ENCODE measurements at regions of chr17 and their contacts with region 1.

Region 1: GRCh38 chr17:7673239-7673638 is 14.1 kb downstream of the TP53 start:
- DNase-seq: peak in 5 of 9 donors; percentile 5 to 29 (median 16)
- ATAC-seq: no peak
- H3K4me3 ChIP-seq: no peak overlapping the region
- H3K4me3 Mint-ChIP-seq: no peak overlapping the region
- H3K27ac ChIP-seq: no peak overlapping the region
- H3K27ac Mint-ChIP-seq: peak overlapping the region in 1 of 9 donors; percentile 19
- H3K4me1 ChIP-seq: no peaks in the 10 kb centered on the region
- H3K4me1 Mint-ChIP-seq: peaks cover 4 to 15% (median 8%) of the 10 kb centered on the region in 7 donors
- H3K27me3 ChIP-seq: no peaks in the 10 kb centered on the region
- H3K27me3 Mint-ChIP-seq: no peaks in the 10 kb centered on the region

Region 2: DNA sequence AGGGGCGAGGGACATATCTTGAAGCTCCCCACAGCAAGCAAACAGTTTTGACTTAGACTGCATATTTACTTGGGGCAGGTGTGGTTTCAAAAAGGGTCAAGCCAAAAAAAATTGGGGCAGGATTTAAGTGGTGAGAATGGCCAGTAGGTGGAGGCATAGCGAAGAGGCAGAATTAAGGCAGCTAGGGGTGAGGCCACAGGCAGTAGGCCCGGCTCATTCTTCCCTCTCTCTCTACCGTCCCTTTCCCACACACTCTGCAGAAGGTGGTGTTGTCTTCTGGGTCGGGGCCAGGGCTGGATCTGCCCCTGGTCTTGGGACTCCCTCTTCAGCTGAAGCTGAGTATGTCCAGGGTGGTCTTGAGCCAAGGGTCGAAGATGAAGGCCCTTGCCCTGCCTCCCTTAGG is 40.7 kb before region 1 on chr17:
- CTCF ChIA-PET with region 1: interaction called, 7 read pairs
- POLR2A ChIA-PET with region 1: interaction called, 7 read pairs
- intact Hi-C with region 1: loop called in 1 of 2 experiments (anchors 2 kb)
- DNase-seq: peak in 4 of 9 donors; percentile 11 to 39 (median 28)
- ATAC-seq: peak; percentile 54
- H3K4me3 ChIP-seq: no peak overlapping the region
- H3K4me3 Mint-ChIP-seq: peak overlapping the region in 1 of 10 donors; percentile 30
- H3K27ac ChIP-seq: no peak overlapping the region
- H3K27ac Mint-ChIP-seq: peak overlapping the region in 1 of 9 donors; percentile 48
- H3K4me1 ChIP-seq: no peaks in the 10 kb centered on the region
- H3K4me1 Mint-ChIP-seq: peaks cover 0 to 7% (median 4%) of the 10 kb centered on the region in 7 donors
- H3K27me3 ChIP-seq: no peaks in the 10 kb centered on the region
- H3K27me3 Mint-ChIP-seq: peaks cover 0 to 2% (median 0%) of the 10 kb centered on the region in 5 donors

Region 3: GRCh38 chr17:7767405-7768021 is 94.3 kb after region 1 on chr17:
- CTCF ChIA-PET with region 1: no interaction called
- POLR2A ChIA-PET with region 1: no interaction called
- intact Hi-C with region 1: no loop called
- DNase-seq: no peak
- ATAC-seq: no peak
- H3K4me3 ChIP-seq: no peak overlapping the region
- H3K4me3 Mint-ChIP-seq: no peak overlapping the region
- H3K27ac ChIP-seq: no peak overlapping the region
- H3K27ac Mint-ChIP-seq: no peak overlapping the region
- H3K4me1 ChIP-seq: no peaks in the 10 kb centered on the region
- H3K4me1 Mint-ChIP-seq: peaks cover 0 to 5% (median 0%) of the 10 kb centered on the region in 7 donors
- H3K27me3 ChIP-seq: no peaks in the 10 kb centered on the region
- H3K27me3 Mint-ChIP-seq: peaks cover 0 to 23% (median 7%) of the 10 kb centered on the region in 5 donors

Region 4: DNA sequence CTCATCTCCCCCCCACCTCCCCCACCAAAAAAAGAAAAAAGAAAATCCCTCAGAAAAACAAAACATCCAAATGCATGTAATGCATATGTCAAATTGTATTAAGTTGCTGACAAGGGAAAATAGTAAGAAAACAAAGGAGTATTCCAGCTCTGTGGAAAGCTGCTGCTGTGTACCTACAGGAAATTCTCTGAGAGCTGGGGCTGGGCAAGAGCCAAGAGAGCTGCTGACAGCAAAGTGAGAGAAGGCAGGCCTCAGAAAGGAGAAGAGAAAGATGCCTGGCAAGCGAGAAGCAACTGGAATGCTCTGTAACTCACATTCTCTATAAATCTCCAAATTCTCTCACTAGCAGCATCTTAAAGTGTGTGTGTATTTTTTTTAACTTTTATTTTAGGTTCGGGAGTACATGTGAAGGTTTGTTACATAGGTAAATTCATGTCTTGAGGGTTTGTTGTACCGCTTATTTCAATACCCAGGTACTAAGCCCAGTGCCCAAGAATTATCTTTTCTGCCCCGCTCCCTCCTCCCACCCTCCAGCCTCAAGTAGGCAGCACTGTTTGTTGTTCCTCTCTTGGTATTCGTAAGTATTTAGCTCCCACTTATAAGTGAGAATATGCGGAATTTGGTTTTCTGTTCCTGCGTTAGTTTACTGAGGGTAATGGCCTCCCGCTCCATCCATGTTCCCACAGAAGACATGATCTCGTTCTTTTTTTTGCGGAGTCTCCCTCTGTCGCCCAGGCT is 283.2 kb after region 1 on chr17:
- CTCF ChIA-PET with region 1: no interaction called
- POLR2A ChIA-PET with region 1: no interaction called
- intact Hi-C with region 1: no loop called
- DNase-seq: no peak
- ATAC-seq: no peak
- H3K4me3 ChIP-seq: no peak overlapping the region
- H3K4me3 Mint-ChIP-seq: no peak overlapping the region
- H3K27ac ChIP-seq: no peak overlapping the region
- H3K27ac Mint-ChIP-seq: no peak overlapping the region
- H3K4me1 ChIP-seq: no peaks in the 10 kb centered on the region
- H3K4me1 Mint-ChIP-seq: peaks cover 2 to 8% (median 3%) of the 10 kb centered on the region in 7 donors
- H3K27me3 ChIP-seq: no peaks in the 10 kb centered on the region
- H3K27me3 Mint-ChIP-seq: peaks cover 0 to 15% (median 0%) of the 10 kb centered on the region in 5 donors